ENCODE measurements at regions of chr10 and their contacts with region 1.

Region 1: GRCh38 chr10:24989867-24990266 is 26.1 kb downstream of the ENKUR start:
- DNase-seq: no peak
- H3K4me3 ChIP-seq: no peak overlapping the region
- CTCF ChIP-seq: no peak

Region 2: DNA sequence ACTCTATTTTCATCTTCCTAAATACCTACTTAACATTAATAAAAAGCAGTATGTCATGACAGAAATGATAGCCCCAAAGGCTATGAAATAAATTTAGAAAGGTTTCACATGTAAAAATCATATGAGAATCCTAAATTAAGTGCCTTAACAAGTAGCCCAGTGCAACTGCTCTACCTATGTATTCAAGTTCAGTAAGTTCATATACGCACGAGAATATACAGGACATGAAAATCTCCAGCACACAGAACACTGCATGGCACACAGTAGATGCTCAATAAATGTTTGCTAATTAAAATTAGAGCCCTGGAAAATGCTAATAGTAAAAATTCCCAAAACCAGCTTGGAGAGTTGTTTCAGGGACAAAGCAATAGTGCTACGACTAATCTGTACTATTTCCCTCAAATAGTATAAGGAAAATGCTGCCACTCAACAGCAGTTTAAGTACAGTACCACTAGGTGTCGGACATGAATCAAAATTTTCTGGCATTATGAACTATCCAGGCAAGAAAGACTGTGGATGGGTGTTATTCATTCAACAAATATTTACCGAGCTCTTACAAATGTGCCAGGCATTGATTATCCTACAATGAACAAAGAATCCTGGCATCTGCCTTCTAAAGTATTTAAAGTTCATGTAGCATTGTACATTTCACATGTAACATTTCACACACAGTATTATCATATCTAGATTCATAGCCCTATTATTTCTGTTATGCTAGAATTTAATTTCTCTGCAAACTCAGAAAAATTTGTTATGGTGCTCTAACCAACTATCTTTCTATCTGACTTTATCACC is 347.0 kb before region 1 on chr10:
- CTCF ChIA-PET with region 1: interaction called, 28 read pairs
- POLR2A ChIA-PET with region 1: no interaction called
- DNase-seq: peak; percentile 59
- H3K4me3 ChIP-seq: no peak overlapping the region
- CTCF ChIP-seq: peak; percentile 68